Esophagus muscularis mucosa (tissue), 4 donors: ENCODE measurements at regions of chr20 and their contacts with region 1.

Region 1: GRCh38 chr20:64119681-64120341 is 12.4 kb upstream of the NPBWR2 start:
- DNase-seq: no peak
- H3K4me3 ChIP-seq: peak overlapping the region in 1 of 4 donors; percentile 30
- H3K27ac ChIP-seq: no peak overlapping the region
- H3K4me1 ChIP-seq: peaks cover 0 to 8% (median 7%) of the 10 kb centered on the region in 4 donors
- H3K27me3 ChIP-seq: peaks cover 0 to 38% (median 5%) of the 10 kb centered on the region in 4 donors
- CTCF ChIP-seq: no peak
- EP300 ChIP-seq: no peak
- POLR2A ChIP-seq: no peak

Region 2: DNA sequence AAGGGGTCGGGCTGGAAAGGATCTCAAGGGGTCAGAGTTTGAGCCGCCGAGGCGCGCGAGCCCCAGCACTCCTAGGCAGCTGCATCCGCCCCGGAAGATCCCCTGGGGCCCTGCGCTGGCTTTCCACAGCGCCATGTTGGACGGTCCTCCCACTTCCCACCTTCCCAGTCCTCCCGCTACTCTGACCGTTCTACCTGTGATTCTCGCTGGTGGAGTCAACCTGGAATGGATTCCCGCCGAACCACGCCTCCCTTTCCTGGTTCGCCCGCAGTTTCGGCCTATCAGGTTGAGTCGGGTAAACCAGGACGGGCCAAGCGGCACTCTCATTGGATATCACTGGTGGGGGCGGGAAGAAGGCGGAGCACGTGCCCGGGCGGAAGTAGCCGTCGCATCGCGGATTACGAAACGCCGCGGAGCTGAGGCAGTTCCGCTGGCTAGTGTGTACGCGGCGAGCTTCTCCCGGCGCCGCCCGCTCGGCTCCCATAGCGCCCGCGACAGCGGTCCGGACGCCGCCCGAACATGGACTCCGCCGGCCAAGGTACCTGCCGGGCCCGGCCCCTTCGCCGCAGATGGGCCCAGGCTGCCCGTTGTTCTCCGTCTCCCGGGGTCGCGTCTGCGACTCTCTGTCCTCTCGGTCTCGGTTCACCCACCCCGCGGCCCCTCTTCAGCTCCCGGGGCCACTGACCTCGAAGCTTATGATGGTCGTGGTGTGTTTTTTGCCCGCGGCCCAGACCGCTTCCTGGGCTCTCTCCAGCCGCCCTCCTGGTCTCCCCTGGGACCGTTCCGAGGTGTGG is 254.8 kb before region 1 on chr20 and contains the start of gene TPD52L2:
- intact Hi-C with region 1: no loop called
- DNase-seq: peak; percentile 100
- H3K4me3 ChIP-seq: peak within 1 kb of the TSS; percentile 76 to 97 (median 86)
- H3K27ac ChIP-seq: peak within 1 kb of the TSS; percentile 89 to 99 (median 96)
- H3K4me1 ChIP-seq: peaks cover 25 to 64% (median 39%) of the 10 kb centered on the region in 4 donors
- H3K27me3 ChIP-seq: no peaks in the 10 kb centered on the region
- CTCF ChIP-seq: peak in 1 of 3 experiments; percentile 19
- EP300 ChIP-seq: no peak
- POLR2A ChIP-seq: peak; percentile 96
- total RNA-seq, gene TPD52L2: 110 to 162 (median 134) TPM

Region 3: GRCh38 chr20:63955827-63956663 is 163.8 kb before region 1 on chr20 and contains the start of gene UCKL1:
- intact Hi-C with region 1: no loop called
- DNase-seq: no peak
- H3K4me3 ChIP-seq: peak within 1 kb of the TSS; percentile 93 to 100 (median 94)
- H3K27ac ChIP-seq: peak within 1 kb of the TSS; percentile 90 to 97 (median 94)
- H3K4me1 ChIP-seq: peaks cover 58 to 63% (median 63%) of the 10 kb centered on the region in 4 donors
- H3K27me3 ChIP-seq: no peaks in the 10 kb centered on the region
- CTCF ChIP-seq: no peak
- EP300 ChIP-seq: no peak
- POLR2A ChIP-seq: peak; percentile 66
- total RNA-seq, gene UCKL1: 16.6 to 31.0 (median 24.1) TPM

Region 4: GRCh38 chr20:64079273-64080012 is 40.4 kb before region 1 on chr20 and contains the start of gene RGS19:
- intact Hi-C with region 1: loop called (anchors 5 kb)
- DNase-seq: no peak
- H3K4me3 ChIP-seq: peak within 1 kb of the TSS; percentile 67 to 86 (median 76)
- H3K27ac ChIP-seq: peak within 1 kb of the TSS; percentile 63 to 85 (median 70)
- H3K4me1 ChIP-seq: peaks cover 36 to 56% (median 45%) of the 10 kb centered on the region in 4 donors
- H3K27me3 ChIP-seq: peaks cover 0 to 25% (median 8%) of the 10 kb centered on the region in 4 donors
- CTCF ChIP-seq: peak in 1 of 3 experiments; percentile 13
- EP300 ChIP-seq: no peak
- POLR2A ChIP-seq: no peak
- total RNA-seq, gene RGS19: 11.4 to 17.7 (median 12.7) TPM